ENCODE measurements at regions of chr19 and their contacts with region 1.

Region 1: GRCh38 chr19:54231077-54231931 is 8.5 kb upstream of the LILRB3 start:
- DNase-seq: peak; percentile 74
- H3K4me3 ChIP-seq: no peak overlapping the region
- H3K27ac ChIP-seq: no peak overlapping the region
- H3K4me1 ChIP-seq: no peaks in the 10 kb centered on the region
- H3K27me3 ChIP-seq: peaks cover 10 to 17% of the 10 kb centered on the region in 2 experiments
- CTCF ChIP-seq: peak; percentile 96 to 100
- POLR2A ChIP-seq: no peak

Region 2: DNA sequence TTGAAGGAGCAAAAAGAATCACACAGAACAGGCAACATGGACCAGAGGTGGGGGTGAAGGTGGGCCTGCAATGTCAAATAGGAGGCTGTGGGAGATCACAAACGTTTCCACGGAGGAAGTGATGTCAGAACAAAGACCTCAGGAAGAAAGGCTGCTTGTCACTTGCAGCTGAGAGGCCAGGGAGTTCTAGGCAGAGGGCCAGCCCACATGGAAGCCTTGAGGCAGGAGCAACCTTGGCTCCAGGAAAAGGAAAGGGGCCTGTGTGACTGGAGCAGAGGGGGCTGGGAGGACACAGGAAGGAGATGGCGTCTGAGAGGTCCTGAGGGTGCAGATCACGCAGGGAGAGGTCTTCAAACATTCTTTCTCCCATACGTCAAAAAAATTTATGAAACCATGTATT is 1144.4 kb before region 1 on chr19:
- CTCF ChIA-PET with region 1: no interaction called
- POLR2A ChIA-PET with region 1: no interaction called
- dilution Hi-C with region 1: no loop called
- intact Hi-C with region 1: loop called (anchors 5 kb)
- DNase-seq: peak; percentile 94
- H3K4me3 ChIP-seq: no peak overlapping the region
- H3K27ac ChIP-seq: peak overlapping the region; percentile 92
- H3K4me1 ChIP-seq: peaks cover 23% of the 10 kb centered on the region
- H3K27me3 ChIP-seq: no peaks in the 10 kb centered on the region
- CTCF ChIP-seq: no peak
- POLR2A ChIP-seq: peak; percentile 50

Region 3: DNA sequence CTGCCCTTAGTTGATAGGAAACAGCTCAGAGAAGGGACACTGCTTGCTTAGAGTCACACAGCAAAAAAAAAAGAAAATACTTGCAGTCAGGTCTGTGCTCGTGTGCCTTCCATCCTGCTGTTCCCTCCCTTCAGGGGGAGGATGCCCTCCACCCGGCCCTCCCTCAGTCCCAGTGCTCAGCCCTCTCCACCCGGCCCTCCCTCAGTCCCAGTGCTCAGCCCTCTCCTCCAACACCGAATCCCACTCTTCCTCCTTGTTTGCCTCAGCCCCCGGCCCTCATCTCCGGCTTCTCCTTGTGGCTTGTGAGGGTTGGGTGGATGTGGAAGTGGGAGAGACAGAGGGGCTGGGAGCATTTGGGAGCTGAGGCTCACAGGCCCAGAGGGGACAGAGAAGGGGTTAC is 121.7 kb before region 1 on chr19:
- CTCF ChIA-PET with region 1: no interaction called
- POLR2A ChIA-PET with region 1: no interaction called
- dilution Hi-C with region 1: no loop called
- intact Hi-C with region 1: no loop called
- DNase-seq: no peak
- H3K4me3 ChIP-seq: no peak overlapping the region
- H3K27ac ChIP-seq: no peak overlapping the region
- H3K4me1 ChIP-seq: peaks cover 3% of the 10 kb centered on the region
- H3K27me3 ChIP-seq: no peaks in the 10 kb centered on the region
- CTCF ChIP-seq: no peak
- POLR2A ChIP-seq: no peak

Region 4: GRCh38 chr19:54168174-54168917 is 63.0 kb before region 1 on chr19:
- CTCF ChIA-PET with region 1: interaction called, 11 read pairs
- POLR2A ChIA-PET with region 1: no interaction called
- dilution Hi-C with region 1: no loop called
- intact Hi-C with region 1: loop called (anchors 1 kb)
- DNase-seq: peak; percentile 82
- H3K4me3 ChIP-seq: no peak overlapping the region
- H3K27ac ChIP-seq: no peak overlapping the region
- H3K4me1 ChIP-seq: no peaks in the 10 kb centered on the region
- H3K27me3 ChIP-seq: peaks cover 0 to 8% of the 10 kb centered on the region in 2 experiments
- CTCF ChIP-seq: peak; percentile 82 to 96
- POLR2A ChIP-seq: no peak